ENCODE measurements at regions of chr1 and their contacts with region 1.

Region 1: GRCh38 chr1:149962123-149962548 is 25.5 kb upstream of the MTMR11 start:
- DNase-seq: peak; percentile 81
- H3K4me3 ChIP-seq: no peak overlapping the region
- H3K27ac ChIP-seq: no peak overlapping the region
- H3K4me1 ChIP-seq: no peaks in the 10 kb centered on the region
- H3K27me3 ChIP-seq: no peaks in the 10 kb centered on the region
- CTCF ChIP-seq: peak; percentile 48 to 53
- POLR2A ChIP-seq: no peak

Region 2: DNA sequence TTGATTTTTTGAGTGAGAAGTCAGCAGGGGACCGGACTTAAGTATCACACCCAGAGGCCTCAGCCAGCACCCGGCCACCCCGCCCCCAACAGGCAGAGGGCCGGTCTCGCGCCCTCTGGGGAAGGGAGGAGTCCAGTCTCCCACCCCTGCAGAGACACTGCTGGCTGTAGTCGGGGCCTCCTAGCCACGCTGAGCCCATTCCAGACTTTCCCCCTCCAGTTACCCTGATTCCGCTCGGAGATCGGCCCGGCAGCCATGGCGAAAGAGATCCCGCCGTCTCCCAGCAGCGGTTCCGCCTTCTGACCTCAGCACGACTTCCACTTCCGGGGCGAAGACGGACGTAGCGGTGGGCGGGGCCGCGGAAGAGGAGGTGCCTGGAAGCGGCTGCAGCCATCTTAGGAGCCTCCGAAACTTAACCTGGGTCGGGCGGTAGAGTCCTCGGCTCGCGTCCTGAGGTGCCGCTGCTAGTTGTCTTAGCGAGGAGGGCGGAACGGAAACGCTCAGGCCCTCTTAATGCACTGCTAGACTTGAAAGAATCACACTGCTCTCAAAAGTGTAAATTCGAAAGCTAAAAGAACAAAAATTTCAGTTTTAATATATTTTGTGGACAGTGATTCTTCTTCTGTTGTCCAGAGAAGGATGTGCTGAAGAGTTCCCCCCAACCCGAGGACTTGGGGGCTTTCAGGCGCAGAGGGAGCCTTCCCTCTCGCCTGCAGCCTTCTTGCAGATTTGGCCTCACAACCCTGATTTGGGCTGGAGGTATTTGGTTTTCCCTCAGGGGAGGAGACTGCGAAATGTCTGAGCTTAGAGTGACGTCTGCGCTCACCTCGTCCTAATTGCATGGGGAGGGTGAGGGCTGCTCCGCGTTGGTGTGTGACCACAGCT is 34.4 kb before region 1 on chr1 and contains the start of gene SF3B4:
- CTCF ChIA-PET with region 1: no interaction called
- POLR2A ChIA-PET with region 1: no interaction called
- dilution Hi-C with region 1: no loop called
- intact Hi-C with region 1: no loop called
- DNase-seq: peak; percentile 94
- H3K4me3 ChIP-seq: peak within 1 kb of the TSS; percentile 65 to 88 (median 77)
- H3K27ac ChIP-seq: peak within 1 kb of the TSS; percentile 74
- H3K4me1 ChIP-seq: peaks cover 27% of the 10 kb centered on the region
- H3K27me3 ChIP-seq: no peaks in the 10 kb centered on the region
- CTCF ChIP-seq: peak in 1 of 2 donors; percentile 13
- POLR2A ChIP-seq: peak; percentile 97
- total RNA-seq, gene SF3B4: 68.7 and 74.4 TPM in 2 replicates

Region 3: GRCh38 chr1:149978547-149979023 is 16.4 kb after region 1 on chr1:
- CTCF ChIA-PET with region 1: interaction called, 10 read pairs
- POLR2A ChIA-PET with region 1: interaction called, 3 read pairs
- dilution Hi-C with region 1: no loop called
- intact Hi-C with region 1: no loop called
- DNase-seq: peak; percentile 33
- H3K4me3 ChIP-seq: no peak overlapping the region
- H3K27ac ChIP-seq: no peak overlapping the region
- H3K4me1 ChIP-seq: peaks cover 9% of the 10 kb centered on the region
- H3K27me3 ChIP-seq: no peaks in the 10 kb centered on the region
- CTCF ChIP-seq: no peak
- POLR2A ChIP-seq: no peak

Region 4: GRCh38 chr1:150051089-150051373 is 88.9 kb after region 1 on chr1:
- CTCF ChIA-PET with region 1: interaction called, 77 read pairs
- POLR2A ChIA-PET with region 1: no interaction called
- dilution Hi-C with region 1: no loop called
- intact Hi-C with region 1: loop called (anchors 1 kb)
- DNase-seq: no peak
- H3K4me3 ChIP-seq: no peak overlapping the region
- H3K27ac ChIP-seq: no peak overlapping the region
- H3K4me1 ChIP-seq: no peaks in the 10 kb centered on the region
- H3K27me3 ChIP-seq: no peaks in the 10 kb centered on the region
- CTCF ChIP-seq: no peak
- POLR2A ChIP-seq: no peak

Region 5: GRCh38 chr1:150067184-150068036 is 105.3 kb after region 1 on chr1 and contains the start of gene VPS45:
- CTCF ChIA-PET with region 1: interaction called, 4 read pairs
- POLR2A ChIA-PET with region 1: no interaction called
- dilution Hi-C with region 1: no loop called
- intact Hi-C with region 1: loop called (anchors 1 kb)
- DNase-seq: peak; percentile 93
- H3K4me3 ChIP-seq: peak within 1 kb of the TSS; percentile 45 to 85 (median 72)
- H3K27ac ChIP-seq: peak within 1 kb of the TSS; percentile 53
- H3K4me1 ChIP-seq: peaks cover 24% of the 10 kb centered on the region
- H3K27me3 ChIP-seq: no peaks in the 10 kb centered on the region
- CTCF ChIP-seq: peak; percentile 18 to 36
- POLR2A ChIP-seq: no peak
- total RNA-seq, gene VPS45: 40.4 and 43.7 TPM in 2 replicates

Region 6: GRCh38 chr1:150149271-150150132 is 187.4 kb after region 1 on chr1 and contains the start of gene PLEKHO1:
- CTCF ChIA-PET with region 1: no interaction called
- POLR2A ChIA-PET with region 1: no interaction called
- dilution Hi-C with region 1: no loop called
- intact Hi-C with region 1: no loop called
- DNase-seq: peak; percentile 88
- H3K4me3 ChIP-seq: peak within 1 kb of the TSS; percentile 89 to 96 (median 95)
- H3K27ac ChIP-seq: peak within 1 kb of the TSS; percentile 87
- H3K4me1 ChIP-seq: peaks cover 42% of the 10 kb centered on the region
- H3K27me3 ChIP-seq: no peaks in the 10 kb centered on the region
- CTCF ChIP-seq: no peak
- POLR2A ChIP-seq: peak; percentile 8
- total RNA-seq, gene PLEKHO1: 101 and 121 TPM in 2 replicates

Region 7: DNA sequence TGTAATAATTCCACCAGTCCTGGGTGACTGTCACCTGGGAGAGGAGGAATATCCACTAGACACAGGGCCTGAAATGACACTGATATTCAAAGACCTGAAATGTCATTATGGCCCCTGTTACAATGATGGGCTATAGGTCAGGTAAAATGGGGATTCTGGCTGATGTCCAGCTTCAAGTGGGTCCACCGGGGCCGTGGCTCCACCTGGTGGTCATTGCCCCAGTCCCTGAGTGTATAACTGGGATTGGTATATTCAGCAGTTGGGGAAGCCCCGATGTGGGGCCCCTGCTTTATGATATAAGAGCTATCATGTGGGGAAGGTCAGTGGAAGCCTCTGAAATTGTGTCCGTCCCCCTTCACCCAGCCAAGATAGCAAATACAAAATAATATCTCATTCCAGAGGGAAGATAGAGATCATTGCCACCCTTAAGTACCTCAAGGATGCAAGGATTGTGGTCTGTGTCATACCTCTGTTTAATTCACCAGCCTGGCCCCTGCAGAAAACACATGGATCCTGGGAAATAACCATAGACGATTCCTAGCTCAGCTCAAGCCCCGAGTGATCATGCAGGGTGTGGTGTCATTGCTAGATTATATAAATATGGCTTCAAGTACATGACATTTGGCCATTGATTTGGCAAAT is 206.9 kb after region 1 on chr1:
- CTCF ChIA-PET with region 1: interaction called, 18 read pairs
- POLR2A ChIA-PET with region 1: no interaction called
- dilution Hi-C with region 1: no loop called
- intact Hi-C with region 1: loop called (anchors 1 kb)
- DNase-seq: peak; percentile 64
- H3K4me3 ChIP-seq: no peak overlapping the region
- H3K27ac ChIP-seq: no peak overlapping the region
- H3K4me1 ChIP-seq: no peaks in the 10 kb centered on the region
- H3K27me3 ChIP-seq: no peaks in the 10 kb centered on the region
- CTCF ChIP-seq: peak; percentile 83 to 85
- POLR2A ChIP-seq: no peak